Caco-2 (cell line): ENCODE measurements at regions of chr20 and their contacts with region 1.

Region 1: DNA sequence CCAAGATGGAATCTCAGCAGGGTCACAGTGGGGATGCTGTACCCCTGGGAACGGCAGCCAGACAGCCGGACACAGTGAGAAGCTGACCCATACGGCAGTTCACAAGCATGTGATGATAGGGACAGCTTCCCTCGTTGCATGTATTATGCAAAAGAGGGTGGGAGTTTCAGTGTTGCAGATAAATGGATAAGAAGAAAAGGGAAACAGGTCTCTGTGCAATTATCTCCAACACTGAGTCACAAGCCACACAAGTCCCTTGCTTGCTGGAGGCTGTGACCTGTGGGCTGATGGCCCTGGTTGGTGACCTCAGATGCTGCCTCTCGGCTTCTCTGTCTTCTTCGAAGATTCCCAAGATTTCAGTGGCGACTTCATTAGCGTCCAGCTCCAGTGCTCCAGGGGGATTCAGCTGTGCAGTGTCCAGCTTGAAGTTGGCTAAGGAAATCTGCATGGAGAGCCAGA is 20.8 kb upstream of the SPO11 start:
- DNase-seq: peak; percentile 67 to 77
- H3K4me3 ChIP-seq: no peak overlapping the region
- H3K4me3 Mint-ChIP-seq: no peak overlapping the region
- H3K27ac Mint-ChIP-seq: peak overlapping the region; percentile 76
- H3K4me1 ChIP-seq: peaks cover 66% of the 10 kb centered on the region
- H3K4me1 Mint-ChIP-seq: peaks cover 38% of the 10 kb centered on the region
- H3K27me3 ChIP-seq: no peaks in the 10 kb centered on the region
- H3K27me3 Mint-ChIP-seq: no peaks in the 10 kb centered on the region
- CTCF ChIP-seq: no peak

Region 2: GRCh38 chr20:57252559-57253162 is 56.2 kb before region 1 on chr20:
- CTCF ChIA-PET with region 1: interaction called, 8 read pairs
- POLR2A ChIA-PET with region 1: interaction called, 7 read pairs
- intact Hi-C with region 1: loop called (anchors 2 kb)
- DNase-seq: no peak
- H3K4me3 ChIP-seq: no peak overlapping the region
- H3K4me3 Mint-ChIP-seq: no peak overlapping the region
- H3K27ac Mint-ChIP-seq: peak overlapping the region; percentile 55
- H3K4me1 ChIP-seq: peaks cover 17% of the 10 kb centered on the region
- H3K4me1 Mint-ChIP-seq: peaks cover 55% of the 10 kb centered on the region
- H3K27me3 ChIP-seq: no peaks in the 10 kb centered on the region
- H3K27me3 Mint-ChIP-seq: no peaks in the 10 kb centered on the region
- CTCF ChIP-seq: no peak

Region 3: GRCh38 chr20:57290749-57291402 is 18.0 kb before region 1 on chr20:
- CTCF ChIA-PET with region 1: interaction called, 14 read pairs
- POLR2A ChIA-PET with region 1: interaction called, 32 read pairs
- intact Hi-C with region 1: loop called (anchors 1 kb)
- DNase-seq: peak in 1 of 2 experiments; percentile 66
- H3K4me3 ChIP-seq: no peak overlapping the region
- H3K4me3 Mint-ChIP-seq: no peak overlapping the region
- H3K27ac Mint-ChIP-seq: peak overlapping the region; percentile 28
- H3K4me1 ChIP-seq: peaks cover 91% of the 10 kb centered on the region
- H3K4me1 Mint-ChIP-seq: peaks cover 76% of the 10 kb centered on the region
- H3K27me3 ChIP-seq: no peaks in the 10 kb centered on the region
- H3K27me3 Mint-ChIP-seq: no peaks in the 10 kb centered on the region
- CTCF ChIP-seq: peak; percentile 51 to 74

Region 4: GRCh38 chr20:57432874-57433491 is 124.1 kb after region 1 on chr20:
- CTCF ChIA-PET with region 1: no interaction called
- POLR2A ChIA-PET with region 1: no interaction called
- intact Hi-C with region 1: no loop called
- DNase-seq: peak in 1 of 2 experiments; percentile 40
- H3K4me3 ChIP-seq: no peak overlapping the region
- H3K4me3 Mint-ChIP-seq: no peak overlapping the region
- H3K27ac Mint-ChIP-seq: no peak overlapping the region
- H3K4me1 ChIP-seq: peaks cover 7% of the 10 kb centered on the region; the same call in 1 of the 2 replicates
- H3K4me1 Mint-ChIP-seq: no peaks in the 10 kb centered on the region
- H3K27me3 ChIP-seq: no peaks in the 10 kb centered on the region; the same call in 1 of the 2 replicates
- H3K27me3 Mint-ChIP-seq: peaks cover 12% of the 10 kb centered on the region
- CTCF ChIP-seq: no peak